Kidney (tissue), 22 donors: ENCODE measurements at regions of chr6 and their contacts with region 1.

Region 1: GRCh38 chr6:105397987-105398386 is 4.9 kb downstream of the PREP start:
- DNase-seq: no peak
- H3K4me3 ChIP-seq: no peak overlapping the region
- H3K27ac ChIP-seq: no peak overlapping the region
- H3K4me1 ChIP-seq: peaks cover 0 to 8% (median 8%) of the 10 kb centered on the region in 3 donors
- H3K27me3 ChIP-seq: no peaks in the 10 kb centered on the region
- CTCF ChIP-seq: no peak

Region 2: GRCh38 chr6:105094133-105094640 is 303.8 kb before region 1 on chr6:
- intact Hi-C with region 1: loop called (anchors 10 kb)
- DNase-seq: no peak
- H3K4me3 ChIP-seq: no peak overlapping the region
- H3K27ac ChIP-seq: no peak overlapping the region
- H3K4me1 ChIP-seq: no peaks in the 10 kb centered on the region
- H3K27me3 ChIP-seq: no peaks in the 10 kb centered on the region
- CTCF ChIP-seq: no peak

Region 3: GRCh38 chr6:105733565-105734162 is 335.7 kb after region 1 on chr6:
- intact Hi-C with region 1: no loop called
- DNase-seq: peak in 2 of 5 donors; percentile 17 to 25
- H3K4me3 ChIP-seq: no peak overlapping the region
- H3K27ac ChIP-seq: no peak overlapping the region
- H3K4me1 ChIP-seq: no peaks in the 10 kb centered on the region
- H3K27me3 ChIP-seq: no peaks in the 10 kb centered on the region
- CTCF ChIP-seq: peak; percentile 39

Region 4: GRCh38 chr6:105835373-105835772 is 437.4 kb after region 1 on chr6:
- intact Hi-C with region 1: no loop called
- DNase-seq: peak in 4 of 5 donors; percentile 37 to 56 (median 48)
- H3K4me3 ChIP-seq: no peak overlapping the region
- H3K27ac ChIP-seq: no peak overlapping the region
- H3K4me1 ChIP-seq: no peaks in the 10 kb centered on the region
- H3K27me3 ChIP-seq: no peaks in the 10 kb centered on the region
- CTCF ChIP-seq: no peak